ENCODE measurements at regions of chr3 and their contacts with region 1.

Region 1: GRCh38 chr3:127768346-127769008 is 53.8 kb downstream of the MGLL start:
- DNase-seq: peak; percentile 89
- H3K4me3 Mint-ChIP-seq: peak overlapping the region; percentile 4
- H3K27ac Mint-ChIP-seq: peak overlapping the region; percentile 71
- H3K4me1 Mint-ChIP-seq: peaks cover 25% of the 10 kb centered on the region
- H3K27me3 Mint-ChIP-seq: no peaks in the 10 kb centered on the region
- CTCF ChIP-seq: no peak

Region 2: GRCh38 chr3:127747723-127748521 is 20.6 kb before region 1 on chr3:
- CTCF ChIA-PET with region 1: interaction called, 9 read pairs
- POLR2A ChIA-PET with region 1: interaction called, 6 read pairs
- intact Hi-C with region 1: loop called (anchors 1 kb)
- DNase-seq: peak; percentile 78
- H3K4me3 Mint-ChIP-seq: peak overlapping the region; percentile 11
- H3K27ac Mint-ChIP-seq: peak overlapping the region; percentile 49
- H3K4me1 Mint-ChIP-seq: peaks cover 46% of the 10 kb centered on the region
- H3K27me3 Mint-ChIP-seq: no peaks in the 10 kb centered on the region
- CTCF ChIP-seq: no peak

Region 3: GRCh38 chr3:127800508-127800907 is 32.0 kb after region 1 on chr3:
- CTCF ChIA-PET with region 1: interaction called, 3 read pairs
- POLR2A ChIA-PET with region 1: interaction called, 8 read pairs
- intact Hi-C with region 1: loop called (anchors 5 kb)
- DNase-seq: no peak
- H3K4me3 Mint-ChIP-seq: no peak overlapping the region
- H3K27ac Mint-ChIP-seq: no peak overlapping the region
- H3K4me1 Mint-ChIP-seq: peaks cover 42% of the 10 kb centered on the region
- H3K27me3 Mint-ChIP-seq: no peaks in the 10 kb centered on the region
- CTCF ChIP-seq: no peak

Region 4: GRCh38 chr3:127817396-127817841 is 48.9 kb after region 1 on chr3:
- CTCF ChIA-PET with region 1: no interaction called
- POLR2A ChIA-PET with region 1: interaction called, 6 read pairs
- intact Hi-C with region 1: loop called (anchors 1 kb)
- DNase-seq: peak; percentile 92
- H3K4me3 Mint-ChIP-seq: no peak overlapping the region
- H3K27ac Mint-ChIP-seq: peak overlapping the region; percentile 90
- H3K4me1 Mint-ChIP-seq: peaks cover 43% of the 10 kb centered on the region
- H3K27me3 Mint-ChIP-seq: no peaks in the 10 kb centered on the region
- CTCF ChIP-seq: no peak

Measured in MCF 10A (cell line).